Activated T-helper 1 cell treated with anti-CD3 and anti-CD28 coated beads, Interleukin-12 subunit alpha, Interleukin-12 subunit beta, Interleukin-2, Interleukin-4 antibody, amounts not matched to agents 30 ng/mL and 10 ng/mL and 1 ng/mL, durations not matched to agents 14 hours and 24 hours and 36 hours (primary cell): ENCODE measurements at regions of chr6 and their contacts with region 1.

Region 1: DNA sequence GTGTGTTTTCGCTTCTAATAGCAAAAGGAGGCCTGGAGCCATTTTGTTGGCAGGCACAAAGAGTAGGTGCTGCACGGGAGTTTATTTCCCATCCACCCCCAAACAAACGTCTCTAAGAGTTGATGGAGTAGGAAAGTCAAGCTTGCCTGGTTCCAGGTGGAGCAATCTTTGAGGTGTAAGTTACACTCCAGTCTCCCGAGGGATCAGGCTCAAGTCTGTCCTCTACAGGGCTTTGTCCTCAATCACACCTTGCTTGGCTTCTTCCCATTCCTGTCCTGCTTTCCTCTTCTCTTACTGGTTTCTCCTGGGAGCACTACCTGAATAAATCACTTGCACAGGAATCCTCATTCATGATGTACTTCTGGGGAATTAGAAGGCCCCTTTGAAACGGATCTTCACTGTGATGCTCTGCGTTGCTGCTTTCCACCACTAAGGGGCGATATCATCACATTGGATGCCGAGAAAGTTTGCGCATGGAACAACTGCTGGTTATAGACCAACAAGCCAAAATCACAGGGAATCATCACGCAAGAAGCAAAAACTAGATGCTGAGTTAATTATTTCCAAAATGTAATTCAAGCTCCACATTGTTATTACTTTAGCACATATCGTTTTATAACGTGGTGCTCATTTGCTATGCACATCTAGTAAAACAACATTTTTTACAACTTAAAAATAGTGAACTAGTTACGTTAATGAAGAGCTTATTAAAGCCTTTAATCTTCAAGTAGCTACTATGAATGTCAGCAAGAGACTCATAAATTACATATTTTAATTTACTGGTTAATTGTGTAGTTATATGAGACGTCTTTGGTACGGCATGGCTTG is 156.8 kb downstream of the DNAH8 start:
- DNase-seq: peak; percentile 36
- H3K4me3 Mint-ChIP-seq: no peak overlapping the region
- H3K27ac Mint-ChIP-seq: no peak overlapping the region
- H3K4me1 Mint-ChIP-seq: peaks cover 37% of the 10 kb centered on the region
- H3K27me3 Mint-ChIP-seq: peaks cover 6% of the 10 kb centered on the region

Region 2: GRCh38 chr6:38933432-38933831 is 61.5 kb after region 1 on chr6:
- intact Hi-C with region 1: loop called (anchors 2 kb)
- DNase-seq: no peak
- H3K4me3 Mint-ChIP-seq: no peak overlapping the region
- H3K27ac Mint-ChIP-seq: no peak overlapping the region
- H3K4me1 Mint-ChIP-seq: no peaks in the 10 kb centered on the region
- H3K27me3 Mint-ChIP-seq: peaks cover 13% of the 10 kb centered on the region

Region 3: DNA sequence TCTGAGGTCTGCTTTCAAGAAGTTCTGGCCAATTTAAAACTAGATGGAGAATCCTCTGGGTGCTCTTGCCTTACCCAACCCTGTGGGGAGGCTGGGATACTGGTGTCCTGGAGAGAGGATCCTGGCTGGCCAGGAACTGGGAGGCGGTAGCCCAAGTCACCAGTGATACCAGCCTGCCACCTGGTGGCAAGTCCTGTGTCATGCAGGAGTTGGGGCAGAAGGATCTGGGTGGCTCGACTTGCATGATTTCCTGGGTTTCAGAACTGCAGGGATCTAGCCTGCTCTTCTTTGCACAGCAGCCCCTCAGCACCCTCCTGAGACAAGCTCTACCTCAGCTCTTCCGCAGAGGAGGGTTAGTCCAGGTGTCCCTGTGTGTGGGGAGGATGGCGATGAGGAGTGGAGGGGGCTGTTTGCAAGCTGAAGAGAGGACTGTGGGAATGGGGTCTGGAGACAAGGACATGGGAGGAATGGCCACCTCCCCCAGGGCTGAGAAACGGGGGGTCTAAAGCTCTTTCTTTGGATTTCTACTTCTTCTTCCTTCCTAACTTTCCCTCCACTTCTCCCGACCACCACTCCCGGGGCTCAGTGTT is 438.1 kb after region 1 on chr6:
- intact Hi-C with region 1: loop called (anchors 1 kb)
- DNase-seq: peak; percentile 38
- H3K4me3 Mint-ChIP-seq: no peak overlapping the region
- H3K27ac Mint-ChIP-seq: no peak overlapping the region
- H3K4me1 Mint-ChIP-seq: no peaks in the 10 kb centered on the region
- H3K27me3 Mint-ChIP-seq: peaks cover 28% of the 10 kb centered on the region